ENCODE measurements at regions of chr5 and their contacts with region 1.

Region 1: GRCh38 chr5:40834849-40835787 is at the start of gene RPL37:
- DNase-seq: peak; percentile 97 to 98
- ATAC-seq: peak; percentile 98 to 100 (median 100)
- H3K4me3 ChIP-seq: peak within 1 kb of the TSS; percentile 97
- H3K27ac ChIP-seq: peak within 1 kb of the TSS; percentile 98
- H3K4me1 ChIP-seq: peaks cover 22% of the 10 kb centered on the region
- H3K27me3 ChIP-seq: no peaks in the 10 kb centered on the region
- CTCF ChIP-seq: no peak
- total RNA-seq, gene RPL37: 737 to 1,162 (median 919) TPM

Region 2: DNA sequence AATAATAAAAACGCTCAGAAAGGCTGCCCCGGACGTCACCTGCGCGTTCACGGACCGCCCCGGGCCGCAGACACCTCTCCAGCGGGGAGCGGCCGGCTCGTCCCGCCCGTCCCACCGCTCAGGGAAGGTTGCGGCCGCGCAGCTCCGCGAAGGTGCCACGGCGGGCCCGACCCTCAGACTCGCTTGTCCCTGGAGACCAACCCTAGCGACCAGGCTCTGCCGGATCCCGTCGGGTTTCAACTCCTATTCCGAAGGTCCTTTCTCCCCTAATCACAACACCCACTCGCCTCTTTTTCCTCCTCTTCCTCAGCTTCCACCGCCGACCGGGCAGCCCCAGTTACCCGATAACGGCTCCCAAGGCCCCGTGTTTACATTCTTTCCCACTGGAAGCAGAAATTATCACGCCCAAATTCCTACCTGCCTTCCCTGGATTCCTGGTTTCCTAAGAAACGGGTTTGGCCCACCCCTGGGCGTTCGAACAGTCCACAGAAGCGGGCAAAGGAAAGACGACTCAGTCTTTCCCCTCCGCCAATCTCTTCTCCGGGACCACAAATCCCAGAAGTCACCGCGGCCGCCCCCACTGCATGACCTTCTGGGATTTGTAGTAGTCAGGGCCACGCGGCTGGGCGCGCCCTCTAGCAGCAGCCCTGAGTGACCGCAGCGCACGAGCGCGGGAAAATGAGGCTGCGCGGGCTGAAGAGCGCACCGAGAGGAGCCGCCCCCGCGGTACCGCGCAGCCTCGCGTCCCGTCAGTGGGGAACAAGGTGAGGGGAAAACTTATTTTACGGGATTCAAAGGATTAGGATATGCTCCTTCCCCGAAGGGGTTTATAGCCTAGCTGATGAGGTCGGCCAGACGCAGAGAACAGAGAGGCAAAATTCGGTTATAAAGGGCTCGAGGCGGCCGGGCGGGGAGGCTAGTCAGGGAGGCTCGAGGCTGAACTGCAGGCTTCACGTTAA is 79.4 kb before region 1 on chr5 and contains the start of gene TTC33:
- intact Hi-C with region 1: loop called in 1 of 2 experiments (anchors 2 kb)
- DNase-seq: peak; percentile 96 to 97
- ATAC-seq: peak; percentile 98 to 99 (median 99)
- H3K4me3 ChIP-seq: peak within 1 kb of the TSS; percentile 98
- H3K27ac ChIP-seq: peak within 1 kb of the TSS; percentile 95
- H3K4me1 ChIP-seq: peaks cover 15% of the 10 kb centered on the region
- H3K27me3 ChIP-seq: no peaks in the 10 kb centered on the region
- CTCF ChIP-seq: peak; percentile 59
- total RNA-seq, gene TTC33: 19.7 to 38.5 (median 27.0) TPM

Region 3: DNA sequence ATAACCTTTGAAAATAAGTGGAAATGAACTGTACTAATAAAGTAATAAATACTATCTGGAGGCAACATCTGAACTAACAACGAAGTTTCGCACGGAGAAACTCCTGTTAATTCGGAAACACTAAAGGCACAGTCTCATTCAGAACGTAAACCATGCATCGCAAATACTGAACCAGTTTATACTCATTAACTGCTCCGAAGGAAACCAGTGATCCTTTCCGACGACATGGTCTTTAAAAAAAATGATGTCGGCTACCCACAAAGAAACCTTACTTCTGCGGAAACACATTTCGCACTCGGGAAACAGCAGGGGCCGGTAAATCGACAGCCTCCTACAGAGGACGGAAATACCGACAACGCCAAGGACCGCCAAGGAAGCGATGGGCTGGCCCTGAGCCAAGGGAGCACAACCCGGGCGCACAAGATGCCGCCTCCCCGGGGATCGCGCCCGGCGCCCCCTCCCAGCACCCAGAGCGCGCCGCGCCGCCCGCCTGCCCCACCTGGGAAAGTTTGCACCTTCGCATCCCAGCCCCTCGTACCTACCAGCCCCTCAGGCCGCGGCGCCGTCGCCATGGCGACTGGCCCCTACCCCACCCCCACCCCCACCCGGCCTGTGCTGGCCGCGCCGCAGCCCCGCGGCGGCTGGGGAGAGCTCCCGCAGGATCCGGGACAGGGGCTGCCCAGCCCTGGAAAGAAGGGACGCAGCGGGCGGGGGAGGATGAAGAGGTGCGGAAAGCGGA is 37.7 kb before region 1 on chr5:
- intact Hi-C with region 1: loop called in 1 of 2 experiments (anchors 1 kb)
- DNase-seq: peak; percentile 78 to 85
- ATAC-seq: peak; percentile 72 to 80 (median 72)
- H3K4me3 ChIP-seq: peak overlapping the region; percentile 89
- H3K27ac ChIP-seq: peak overlapping the region; percentile 79
- H3K4me1 ChIP-seq: peaks cover 12% of the 10 kb centered on the region
- H3K27me3 ChIP-seq: no peaks in the 10 kb centered on the region
- CTCF ChIP-seq: no peak

Region 4: DNA sequence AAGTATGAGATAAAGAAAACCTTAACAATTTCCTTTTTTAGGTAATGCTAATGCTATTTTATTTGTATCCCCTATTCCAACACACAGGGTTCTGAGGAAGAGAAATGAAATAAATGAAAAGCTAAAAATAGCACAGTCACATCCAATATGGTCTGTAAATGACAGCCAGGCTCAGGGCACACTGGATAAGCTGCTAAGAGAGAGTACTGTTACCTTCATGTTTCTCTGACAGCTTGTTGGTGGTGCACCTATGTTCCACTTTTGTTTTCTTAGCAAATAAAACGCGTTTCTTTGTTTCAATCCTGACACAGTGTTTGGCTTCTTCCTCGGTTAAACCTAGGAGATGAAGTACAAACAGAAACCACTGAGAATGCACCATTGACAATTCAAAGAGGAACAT is 336.9 kb after region 1 on chr5:
- intact Hi-C with region 1: no loop called
- DNase-seq: no peak
- ATAC-seq: no peak
- H3K4me3 ChIP-seq: no peak overlapping the region
- H3K27ac ChIP-seq: no peak overlapping the region
- H3K4me1 ChIP-seq: no peaks in the 10 kb centered on the region
- H3K27me3 ChIP-seq: no peaks in the 10 kb centered on the region
- CTCF ChIP-seq: no peak

Region 5: GRCh38 chr5:41246376-41246775 is 411.3 kb after region 1 on chr5:
- intact Hi-C with region 1: no loop called
- DNase-seq: no peak
- ATAC-seq: no peak
- H3K4me3 ChIP-seq: no peak overlapping the region
- H3K27ac ChIP-seq: no peak overlapping the region
- H3K4me1 ChIP-seq: no peaks in the 10 kb centered on the region
- H3K27me3 ChIP-seq: no peaks in the 10 kb centered on the region
- CTCF ChIP-seq: no peak